Calu3 (cell line): ENCODE measurements at regions of chr2 and their contacts with region 1.

Region 1: DNA sequence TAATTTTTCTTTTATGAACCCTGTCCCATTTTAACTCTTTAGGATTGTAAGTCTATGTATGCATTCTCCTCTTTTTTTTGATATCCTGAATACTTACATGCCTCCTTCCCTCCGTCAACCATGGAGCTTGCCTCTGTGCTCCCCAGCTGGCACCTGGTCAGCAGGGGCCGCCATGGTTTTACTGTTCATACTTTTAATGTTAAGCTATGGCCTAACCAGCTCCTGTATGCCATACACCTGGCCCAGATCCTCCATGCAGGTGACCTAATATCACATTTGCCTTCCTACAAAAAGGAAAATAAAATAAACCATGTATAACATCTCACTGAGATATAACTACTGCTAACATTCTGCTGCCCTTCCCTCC is 283.1 kb upstream of the TRIB2 start:
- DNase-seq: peak; percentile 19
- H3K4me3 Mint-ChIP-seq: no peak overlapping the region
- H3K27ac Mint-ChIP-seq: no peak overlapping the region
- H3K4me1 Mint-ChIP-seq: no peaks in the 10 kb centered on the region
- H3K27me3 Mint-ChIP-seq: no peaks in the 10 kb centered on the region
- CTCF ChIP-seq: no peak

Region 2: DNA sequence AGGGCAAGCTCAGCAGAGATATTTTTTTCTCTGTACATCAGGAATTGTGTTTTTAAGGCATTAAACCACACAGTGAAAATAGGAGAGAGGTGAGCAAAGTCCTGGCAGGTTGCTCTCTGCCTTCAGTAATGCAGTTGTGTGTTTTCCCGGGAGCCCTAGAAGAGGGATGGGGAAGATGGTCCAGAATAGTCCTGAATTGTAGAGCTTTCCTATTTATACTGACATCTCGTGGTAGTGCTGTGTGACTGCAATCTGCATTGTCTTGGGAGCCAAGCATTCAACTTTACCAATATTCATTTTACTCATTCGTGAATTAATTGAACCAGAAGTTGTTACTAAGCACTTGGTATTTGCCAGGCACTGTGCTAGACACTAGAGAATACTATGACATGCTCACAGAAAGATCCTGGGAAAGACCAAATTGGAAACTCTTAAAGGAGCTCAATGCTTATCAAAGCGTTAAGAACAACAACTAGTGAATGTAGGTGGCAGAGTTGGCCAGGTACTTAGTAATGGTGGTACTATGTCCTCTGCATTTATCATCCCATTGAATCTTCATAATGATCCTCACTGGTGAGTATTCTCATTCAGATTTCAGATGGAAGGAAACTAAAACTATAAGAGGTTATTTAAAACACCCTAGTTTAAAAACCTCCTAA is 497.7 kb after region 1 on chr2:
- CTCF ChIA-PET with region 1: interaction called, 9 read pairs
- intact Hi-C with region 1: loop called (anchors 2 kb)
- DNase-seq: peak; percentile 7
- H3K4me3 Mint-ChIP-seq: no peak overlapping the region
- H3K27ac Mint-ChIP-seq: no peak overlapping the region
- H3K4me1 Mint-ChIP-seq: no peaks in the 10 kb centered on the region
- H3K27me3 Mint-ChIP-seq: no peaks in the 10 kb centered on the region
- CTCF ChIP-seq: peak; percentile 44

Region 3: DNA sequence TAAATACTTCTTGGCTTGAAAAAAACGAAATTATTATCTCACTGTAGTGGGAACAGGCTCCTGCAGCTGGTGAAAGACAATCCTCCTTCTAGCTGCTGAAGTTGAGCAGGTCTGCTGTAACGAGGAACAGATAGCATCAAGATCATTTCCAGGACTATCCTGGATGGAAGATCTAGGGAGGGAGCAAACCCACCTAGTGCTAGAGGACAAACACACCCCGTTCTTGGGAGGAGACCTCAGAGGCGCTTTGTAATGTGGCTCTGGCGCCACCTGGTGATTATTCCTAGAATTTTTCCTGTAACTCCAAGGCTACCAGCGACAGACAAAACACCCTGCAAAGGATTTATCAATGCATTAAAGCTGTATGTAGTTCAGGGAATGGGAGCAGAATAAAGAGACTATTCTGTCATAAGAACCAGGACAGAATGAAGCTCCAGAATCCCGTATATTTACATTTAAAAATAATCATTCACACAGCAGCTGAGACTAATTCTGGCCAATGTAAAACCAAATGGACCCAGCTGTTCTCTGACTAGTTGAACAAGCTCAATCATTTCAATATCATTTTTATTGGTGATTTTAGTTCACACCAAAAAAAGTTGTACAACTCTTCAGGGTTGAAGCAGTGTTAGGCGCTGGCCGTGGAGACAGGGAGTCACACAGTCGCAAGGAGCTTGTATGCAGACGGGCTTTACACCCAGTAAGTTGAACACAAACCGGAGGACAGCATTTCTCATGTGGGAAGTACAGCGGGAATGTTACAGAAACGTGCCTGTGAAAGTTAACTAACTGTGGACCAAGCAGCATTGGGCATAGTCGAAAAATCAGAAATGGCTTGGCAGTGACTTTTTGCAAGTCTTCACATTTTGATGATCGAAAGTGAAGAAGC is 573.5 kb after region 1 on chr2:
- CTCF ChIA-PET with region 1: interaction called, 3 read pairs
- intact Hi-C with region 1: loop called (anchors 2 kb)
- DNase-seq: peak; percentile 68
- H3K4me3 Mint-ChIP-seq: no peak overlapping the region
- H3K27ac Mint-ChIP-seq: no peak overlapping the region
- H3K4me1 Mint-ChIP-seq: no peaks in the 10 kb centered on the region
- H3K27me3 Mint-ChIP-seq: no peaks in the 10 kb centered on the region
- CTCF ChIP-seq: peak; percentile 86

Region 4: DNA sequence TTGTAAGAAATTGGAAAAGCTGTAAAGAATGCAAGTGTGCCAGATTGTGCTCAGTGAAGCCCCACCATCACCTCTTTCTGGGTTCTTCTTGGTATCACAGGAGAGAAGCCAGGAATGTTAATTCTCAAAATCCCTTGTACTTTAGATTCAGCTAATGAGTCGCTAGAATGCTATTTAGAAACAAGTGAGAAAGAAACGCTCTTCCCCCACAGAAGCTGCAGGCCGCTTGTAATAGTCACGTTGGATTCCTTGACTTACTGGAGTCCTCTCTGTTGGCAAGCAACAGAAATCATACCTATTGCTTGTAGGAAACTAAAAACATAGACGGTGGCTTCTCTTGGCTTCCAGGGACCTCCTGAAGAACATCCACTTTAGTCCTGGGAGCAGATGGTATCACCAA is 1823.3 kb after region 1 on chr2:
- CTCF ChIA-PET with region 1: no interaction called
- intact Hi-C with region 1: no loop called
- DNase-seq: no peak
- H3K4me3 Mint-ChIP-seq: no peak overlapping the region
- H3K27ac Mint-ChIP-seq: no peak overlapping the region
- H3K4me1 Mint-ChIP-seq: no peaks in the 10 kb centered on the region
- H3K27me3 Mint-ChIP-seq: no peaks in the 10 kb centered on the region
- CTCF ChIP-seq: no peak